ENCODE measurements at regions of chr14 and their contacts with region 1.

Region 1: DNA sequence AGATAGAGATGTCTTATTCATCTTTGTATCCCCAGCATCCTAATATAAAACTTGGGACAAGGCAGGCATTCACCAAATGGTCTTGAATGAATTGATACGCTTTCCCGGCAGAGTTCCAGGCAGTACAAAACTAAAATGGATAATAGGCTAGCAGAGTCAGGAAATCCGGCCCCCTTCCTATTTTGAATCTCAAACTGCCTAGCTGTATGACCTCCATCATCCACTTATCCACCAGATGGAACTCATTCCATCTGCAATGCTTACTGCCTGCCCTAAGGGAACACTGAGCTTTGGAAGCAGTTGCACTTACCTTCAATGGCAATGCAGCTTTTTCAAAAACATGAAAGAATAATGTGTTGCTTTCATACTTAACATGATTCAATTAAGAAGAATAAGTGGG is 43.4 kb downstream of the BDKRB1 start:
- DNase-seq: no peak

Region 2: DNA sequence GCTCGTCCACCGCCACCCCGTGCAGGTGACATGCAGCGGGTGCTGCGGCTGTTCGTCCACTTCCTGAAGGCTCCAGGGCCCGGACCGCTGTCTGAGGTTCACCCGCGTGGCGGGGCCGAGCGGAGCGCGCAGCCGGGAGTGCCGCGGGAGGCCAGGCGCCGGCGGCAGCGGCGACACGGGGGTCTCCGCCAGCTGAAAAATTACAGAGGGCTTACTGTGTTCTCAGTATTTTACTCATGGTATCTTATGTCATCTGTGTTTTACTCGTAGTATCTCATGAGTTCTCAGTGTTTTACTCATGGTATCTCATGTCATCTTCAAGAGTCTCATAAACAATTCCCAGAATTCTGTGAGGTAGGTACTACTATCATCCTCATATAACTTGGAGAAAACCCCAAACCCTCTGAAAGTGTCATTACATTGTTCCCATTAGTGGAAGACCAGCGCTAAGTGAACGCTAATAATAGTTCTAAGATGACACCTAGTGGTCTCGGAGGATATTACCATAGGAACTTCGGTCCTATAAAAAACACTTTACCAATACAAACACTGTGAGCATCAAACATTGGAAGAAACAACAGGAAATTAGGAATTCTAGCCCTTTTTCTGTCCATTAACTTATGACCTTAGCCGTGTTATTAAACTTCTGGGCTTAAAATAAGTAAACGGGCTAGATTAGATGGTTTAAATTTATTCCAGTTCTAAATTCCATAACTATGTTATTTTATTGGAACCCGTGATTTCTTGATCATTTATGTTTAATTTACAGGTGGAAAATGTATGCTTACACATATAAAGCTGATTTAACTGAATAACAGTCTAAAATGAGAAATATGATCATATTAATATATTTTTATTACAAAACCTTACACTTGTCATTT is 124.9 kb after region 1 on chr14:
- intact Hi-C with region 1: loop called (anchors 2 kb)
- DNase-seq: no peak

Region 3: DNA sequence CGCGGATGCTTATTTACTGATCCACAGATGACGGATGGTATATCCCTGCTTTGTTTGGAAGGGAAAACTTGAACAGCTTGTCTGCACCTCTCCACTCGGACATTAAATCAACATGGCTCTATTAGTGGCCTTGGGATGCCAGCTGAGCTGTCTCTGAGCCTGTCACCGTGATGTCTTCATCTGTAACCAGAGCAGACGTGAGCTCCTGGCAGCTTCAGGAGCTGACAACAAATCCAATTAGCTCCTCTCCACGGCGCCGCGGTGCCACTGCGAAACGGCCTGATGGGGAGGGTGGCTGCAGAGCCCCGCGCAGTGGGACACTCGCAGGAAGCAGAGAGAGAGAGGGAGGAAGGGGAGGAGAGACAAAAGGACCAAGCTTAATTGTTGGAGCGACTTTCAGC is 315.0 kb after region 1 on chr14:
- intact Hi-C with region 1: no loop called
- DNase-seq: no peak

Measured in cardiac septum (tissue), 1 donor.